Astrocyte of the cerebellum (primary cell): ENCODE measurements at regions of chr10 and their contacts with region 1.

Region 1: GRCh38 chr10:3906511-3907111 is 121.6 kb upstream of the KLF6 start:
- DNase-seq: peak; percentile 63
- H3K4me3 ChIP-seq: no peak overlapping the region
- CTCF ChIP-seq: no peak

Region 2: GRCh38 chr10:3828404-3829155 is 78.0 kb before region 1 on chr10:
- in situ Hi-C with region 1: loop called (anchors 5 kb)
- DNase-seq: no peak
- H3K4me3 ChIP-seq: no peak overlapping the region
- CTCF ChIP-seq: no peak

Region 3: GRCh38 chr10:3852147-3852904 is 54.3 kb before region 1 on chr10:
- in situ Hi-C with region 1: no loop called
- DNase-seq: peak; percentile 97
- H3K4me3 ChIP-seq: no peak overlapping the region
- CTCF ChIP-seq: no peak

Region 4: GRCh38 chr10:3873728-3874461 is 32.7 kb before region 1 on chr10:
- in situ Hi-C with region 1: no loop called
- DNase-seq: no peak
- H3K4me3 ChIP-seq: no peak overlapping the region
- CTCF ChIP-seq: no peak